Sigmoid colon (tissue), 7 donors: ENCODE measurements at regions of chr14 and their contacts with region 1.

Region 1: GRCh38 chr14:68137704-68138619 is 318.4 kb downstream of the RAD51B start:
- DNase-seq: peak; percentile 81
- H3K4me3 ChIP-seq: no peak overlapping the region
- H3K27ac ChIP-seq: peak overlapping the region; percentile 86 to 92 (median 88)
- H3K4me1 ChIP-seq: peaks cover 0 to 72% (median 60%) of the 10 kb centered on the region in 4 donors
- H3K27me3 ChIP-seq: no peaks in the 10 kb centered on the region
- CTCF ChIP-seq: no peak
- EP300 ChIP-seq: no peak
- POLR2A ChIP-seq: no peak

Region 2: DNA sequence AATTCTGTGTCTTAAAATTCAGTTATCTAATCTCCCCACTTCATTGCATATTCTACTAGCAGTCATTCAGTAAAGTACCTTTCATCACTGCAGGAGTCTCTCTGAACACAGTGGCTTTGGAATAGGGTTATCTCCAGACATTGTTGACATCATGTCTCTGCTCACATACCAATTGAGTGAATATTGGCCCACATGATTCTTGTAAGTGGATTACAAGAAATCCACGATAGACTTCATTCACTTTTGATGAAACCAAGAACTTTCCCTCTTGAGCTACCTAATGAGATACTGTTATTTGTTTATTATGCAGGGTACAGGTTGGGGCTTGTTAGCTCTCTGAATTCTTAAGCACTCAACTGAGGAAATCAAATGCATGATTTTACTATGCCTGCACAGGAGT is 33.4 kb before region 1 on chr14:
- intact Hi-C with region 1: loop called (anchors 2 kb)
- DNase-seq: no peak
- H3K4me3 ChIP-seq: no peak overlapping the region
- H3K27ac ChIP-seq: peak overlapping the region; percentile 61 to 88 (median 78)
- H3K4me1 ChIP-seq: peaks cover 0 to 76% (median 68%) of the 10 kb centered on the region in 4 donors
- H3K27me3 ChIP-seq: no peaks in the 10 kb centered on the region
- CTCF ChIP-seq: no peak
- EP300 ChIP-seq: no peak
- POLR2A ChIP-seq: no peak

Region 3: GRCh38 chr14:68210729-68211299 is 72.9 kb after region 1 on chr14:
- intact Hi-C with region 1: no loop called
- DNase-seq: no peak
- H3K4me3 ChIP-seq: peak overlapping the region in 2 of 4 donors; percentile 10 to 16
- H3K27ac ChIP-seq: peak overlapping the region; percentile 63 to 77 (median 67)
- H3K4me1 ChIP-seq: peaks cover 0 to 68% (median 37%) of the 10 kb centered on the region in 4 donors
- H3K27me3 ChIP-seq: no peaks in the 10 kb centered on the region
- CTCF ChIP-seq: no peak
- EP300 ChIP-seq: no peak
- POLR2A ChIP-seq: no peak

Region 4: DNA sequence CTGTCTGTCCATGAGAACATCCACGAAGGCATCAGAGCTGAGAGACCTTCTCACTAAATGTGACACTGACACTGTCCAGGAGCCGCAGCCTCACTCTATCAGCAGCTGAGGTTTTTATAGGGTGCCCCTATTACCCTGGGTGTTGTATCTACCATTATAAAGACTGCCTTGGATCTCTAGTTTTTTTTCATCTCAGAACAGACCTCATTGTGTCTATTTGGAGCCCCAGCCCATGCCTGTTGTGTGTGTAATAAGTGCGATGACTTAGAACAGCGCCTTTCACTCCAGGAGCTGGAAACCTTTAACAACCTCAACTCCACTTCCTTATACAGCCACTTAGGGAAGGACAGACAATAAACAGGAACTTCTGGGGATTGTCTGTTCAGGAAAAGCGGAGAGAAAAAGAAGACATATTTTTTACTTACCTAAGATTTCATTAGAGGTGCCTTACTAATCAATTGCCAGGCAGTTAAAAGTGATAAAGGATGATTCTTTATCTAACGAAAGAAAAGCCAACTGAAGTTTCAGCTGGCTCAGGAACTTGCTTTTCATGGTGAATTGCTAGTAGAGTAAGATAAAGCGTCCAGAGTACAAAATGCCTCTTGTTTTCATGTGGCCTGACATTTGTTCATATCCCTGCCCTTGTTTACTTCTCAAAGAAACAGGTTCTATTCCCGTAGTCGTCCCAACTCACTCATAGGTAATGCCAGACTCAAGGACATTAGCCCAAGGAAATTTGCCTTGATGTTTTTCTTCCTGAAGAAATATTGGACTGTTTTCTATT is 102.2 kb after region 1 on chr14:
- intact Hi-C with region 1: loop called (anchors 5 kb)
- DNase-seq: peak; percentile 88
- H3K4me3 ChIP-seq: no peak overlapping the region
- H3K27ac ChIP-seq: peak overlapping the region; percentile 5 to 90 (median 85)
- H3K4me1 ChIP-seq: peaks cover 0 to 87% (median 75%) of the 10 kb centered on the region in 4 donors
- H3K27me3 ChIP-seq: no peaks in the 10 kb centered on the region
- CTCF ChIP-seq: no peak
- EP300 ChIP-seq: peak; percentile 43 to 87 (median 48)
- POLR2A ChIP-seq: no peak

Region 5: DNA sequence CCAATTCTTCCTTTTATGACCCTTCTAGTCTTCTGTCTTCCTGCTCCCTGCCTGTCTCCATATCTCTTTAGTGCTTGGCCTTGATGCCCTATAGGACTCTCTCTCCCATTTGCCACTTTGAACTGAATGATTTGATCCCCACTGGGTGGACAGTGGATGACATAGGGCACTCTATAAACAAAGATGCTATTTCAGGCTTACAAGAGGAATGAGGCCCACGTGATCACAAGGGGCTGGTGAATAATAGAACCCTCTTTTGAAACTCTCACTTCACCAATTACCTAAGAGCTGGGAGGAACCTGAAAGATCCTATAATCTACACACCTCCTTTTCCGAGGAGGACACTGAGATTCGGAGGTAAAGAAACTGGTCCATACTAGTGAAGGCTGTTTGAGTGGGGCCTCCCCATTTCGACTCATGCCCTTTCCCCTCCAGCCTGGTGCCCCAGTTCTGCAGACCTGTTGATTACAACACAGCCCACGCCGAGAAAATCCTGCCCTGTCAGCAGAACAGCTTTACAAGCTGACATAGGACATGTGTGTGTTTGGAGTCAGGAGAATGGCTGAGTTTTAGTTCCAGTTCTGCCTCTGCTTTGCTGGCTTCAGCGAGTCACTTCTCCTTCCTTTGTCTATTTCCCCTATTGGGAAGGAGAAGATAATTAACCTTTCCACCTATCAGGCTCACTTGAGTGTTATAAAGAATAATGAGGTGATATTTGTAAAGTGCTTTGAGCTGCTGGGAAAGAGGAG is 254.6 kb after region 1 on chr14:
- intact Hi-C with region 1: loop called (anchors 10 kb)
- DNase-seq: peak; percentile 86
- H3K4me3 ChIP-seq: no peak overlapping the region
- H3K27ac ChIP-seq: peak overlapping the region; percentile 65 to 77 (median 75)
- H3K4me1 ChIP-seq: peaks cover 0 to 87% (median 64%) of the 10 kb centered on the region in 4 donors
- H3K27me3 ChIP-seq: no peaks in the 10 kb centered on the region
- CTCF ChIP-seq: no peak
- EP300 ChIP-seq: no peak
- POLR2A ChIP-seq: no peak

Region 6: DNA sequence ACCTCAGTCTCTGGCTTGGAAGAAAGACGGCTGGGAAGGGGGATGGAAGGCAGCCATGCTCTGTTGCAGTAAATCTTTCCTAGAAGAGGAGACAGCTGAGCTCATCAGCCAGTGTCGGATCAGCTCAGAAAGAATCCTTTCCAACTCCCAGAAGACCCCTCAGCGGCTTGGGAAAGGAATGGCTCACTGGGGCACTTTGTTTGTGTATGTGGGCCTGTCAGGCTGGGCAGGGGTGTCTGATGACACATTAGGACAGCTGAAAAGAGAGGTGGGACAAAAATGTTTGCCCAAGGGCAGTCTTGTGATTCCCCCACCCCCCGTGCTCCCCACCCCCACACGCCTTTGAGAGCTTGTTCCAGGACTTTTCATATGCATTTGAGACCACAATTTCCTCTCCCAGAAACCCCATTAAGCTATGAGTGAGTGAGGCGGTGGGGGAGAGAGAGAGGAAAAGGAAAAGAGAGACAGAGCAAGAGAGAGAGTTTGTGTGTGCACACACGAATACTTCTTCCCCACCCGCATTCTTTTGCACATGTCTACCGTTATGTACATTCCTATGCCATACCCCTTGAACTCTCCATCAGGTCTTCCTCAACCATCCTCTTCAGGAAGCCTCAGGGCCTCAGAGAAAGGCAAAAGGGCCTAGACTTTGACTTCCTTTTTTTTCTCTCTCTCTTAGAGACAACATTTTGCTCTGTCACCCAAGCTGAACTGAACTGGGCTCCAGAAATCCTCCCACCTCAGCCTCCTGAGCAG is 456.0 kb after region 1 on chr14:
- intact Hi-C with region 1: loop called (anchors 5 kb)
- DNase-seq: no peak
- H3K4me3 ChIP-seq: no peak overlapping the region
- H3K27ac ChIP-seq: peak overlapping the region in 2 of 4 donors; percentile 16 to 92
- H3K4me1 ChIP-seq: peaks cover 0 to 61% (median 43%) of the 10 kb centered on the region in 4 donors
- H3K27me3 ChIP-seq: no peaks in the 10 kb centered on the region
- CTCF ChIP-seq: no peak
- EP300 ChIP-seq: no peak
- POLR2A ChIP-seq: no peak

Region 7: GRCh38 chr14:68795597-68796417 is 657.8 kb after region 1 on chr14:
- intact Hi-C with region 1: loop called (anchors 5 kb)
- DNase-seq: peak; percentile 95
- H3K4me3 ChIP-seq: peak overlapping the region; percentile 76 to 88 (median 80)
- H3K27ac ChIP-seq: peak overlapping the region; percentile 98 to 100 (median 99)
- H3K4me1 ChIP-seq: peaks cover 0 to 18% (median 9%) of the 10 kb centered on the region in 4 donors
- H3K27me3 ChIP-seq: no peaks in the 10 kb centered on the region
- CTCF ChIP-seq: peak in 3 of 4 experiments; percentile 87 to 97 (median 95)
- EP300 ChIP-seq: peak; percentile 2 to 57 (median 48)
- POLR2A ChIP-seq: peak; percentile 84 to 90

Region 8: DNA sequence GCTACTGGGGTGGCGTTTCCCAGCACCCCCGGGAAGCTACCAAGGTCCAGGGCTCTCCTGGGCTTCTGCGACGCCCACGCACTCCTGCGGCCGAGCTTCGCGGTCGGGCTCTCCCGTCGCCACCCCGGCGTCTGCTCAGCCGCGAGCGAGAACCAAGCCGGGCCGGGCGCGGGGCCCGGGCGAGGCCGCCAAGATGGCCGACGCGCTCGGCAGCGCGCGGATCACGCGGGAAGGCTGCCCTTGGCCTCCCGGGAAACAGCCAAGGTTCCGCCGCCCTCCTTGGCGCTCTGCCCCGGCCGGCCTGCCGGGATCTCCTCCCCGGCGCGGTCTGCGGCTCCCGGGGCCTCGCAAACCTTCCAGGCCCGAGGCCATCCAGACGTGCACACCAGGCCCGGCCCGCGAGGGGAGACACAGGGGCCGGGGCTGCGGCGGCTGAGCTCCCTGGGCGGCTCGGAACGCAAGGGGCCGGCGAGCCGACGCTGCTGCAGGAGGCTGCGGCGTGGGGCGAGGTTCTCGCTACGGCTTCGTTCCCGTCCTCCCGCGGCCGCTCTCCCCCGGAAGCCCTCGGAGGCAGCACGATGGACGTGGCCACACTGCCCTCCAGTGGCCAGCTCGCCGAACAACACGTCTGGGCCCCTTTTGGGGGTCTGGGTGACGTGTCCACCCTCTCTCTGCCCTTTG is 678.4 kb after region 1 on chr14:
- intact Hi-C with region 1: loop called (anchors 5 kb)
- DNase-seq: peak; percentile 96
- H3K4me3 ChIP-seq: peak overlapping the region; percentile 35 to 52 (median 50)
- H3K27ac ChIP-seq: peak overlapping the region; percentile 93 to 99 (median 96)
- H3K4me1 ChIP-seq: peaks cover 0 to 77% (median 69%) of the 10 kb centered on the region in 4 donors
- H3K27me3 ChIP-seq: no peaks in the 10 kb centered on the region
- CTCF ChIP-seq: peak; percentile 92 to 99 (median 98)
- EP300 ChIP-seq: peak in 1 of 4 donors; percentile 47
- POLR2A ChIP-seq: peak; percentile 15 to 38